Activated naive CD8-positive, alpha-beta T cell treated with anti-CD3 and anti-CD28 coated beads, Interleukin-2, amount 10 ng/mL, durations not matched to agents 7 days and 5 days (primary cell): ENCODE measurements at regions of chr6 and their contacts with region 1.

Region 1: DNA sequence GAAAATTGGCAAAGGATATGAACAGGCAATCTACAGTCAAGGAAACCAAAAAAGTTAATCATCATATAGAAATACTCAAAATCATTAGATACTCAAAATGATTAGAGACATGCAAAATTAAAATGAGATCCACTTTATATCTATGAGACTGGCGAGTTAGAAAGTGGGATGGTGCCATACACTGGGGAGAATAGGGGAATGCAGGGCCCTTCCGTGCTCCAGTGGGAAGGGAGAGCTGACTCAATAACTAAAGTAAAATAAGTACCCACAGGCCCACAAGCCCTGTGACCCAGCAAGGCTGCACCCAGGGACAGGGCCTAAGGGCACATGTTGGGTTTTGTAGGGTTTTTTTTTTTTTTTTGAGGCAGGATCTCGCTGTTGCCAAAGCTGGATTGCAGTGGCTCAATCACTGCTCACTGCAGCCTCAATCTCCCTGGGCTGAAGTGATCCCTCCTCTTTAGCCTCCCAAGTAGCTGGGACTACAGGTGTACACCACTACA is 44.9 kb downstream of the BAK1 start:
- DNase-seq: no peak
- ATAC-seq: no peak
- H3K4me3 Mint-ChIP-seq: no peak overlapping the region
- H3K27ac Mint-ChIP-seq: no peak overlapping the region
- H3K4me1 Mint-ChIP-seq: peaks cover 20% of the 10 kb centered on the region
- H3K27me3 Mint-ChIP-seq: peaks cover 11% of the 10 kb centered on the region

Region 2: GRCh38 chr6:33454009-33454946 is 80.9 kb before region 1 on chr6 and contains the start of gene ZBTB9:
- POLR2A ChIA-PET with region 1: interaction called, 12 read pairs
- DNase-seq: peak; percentile 93
- ATAC-seq: peak; percentile 99
- H3K4me3 Mint-ChIP-seq: peak within 1 kb of the TSS; percentile 86
- H3K27ac Mint-ChIP-seq: peak within 1 kb of the TSS; percentile 75
- H3K4me1 Mint-ChIP-seq: peaks cover 21% of the 10 kb centered on the region
- H3K27me3 Mint-ChIP-seq: no peaks in the 10 kb centered on the region
- total RNA-seq, gene ZBTB9: 9.1 to 9.8 TPM

Region 3: GRCh38 chr6:33547499-33547898 is 12.3 kb after region 1 on chr6:
- POLR2A ChIA-PET with region 1: interaction called, 29 read pairs
- DNase-seq: no peak
- ATAC-seq: no peak
- H3K4me3 Mint-ChIP-seq: peak overlapping the region; percentile 34
- H3K27ac Mint-ChIP-seq: peak overlapping the region; percentile 79
- H3K4me1 Mint-ChIP-seq: peaks cover 21% of the 10 kb centered on the region
- H3K27me3 Mint-ChIP-seq: no peaks in the 10 kb centered on the region

Region 4: GRCh38 chr6:33570806-33571636 is 35.9 kb after region 1 on chr6:
- POLR2A ChIA-PET with region 1: interaction called, 28 read pairs
- DNase-seq: peak; percentile 93
- ATAC-seq: peak; percentile 91
- H3K4me3 Mint-ChIP-seq: peak overlapping the region; percentile 90
- H3K27ac Mint-ChIP-seq: peak overlapping the region; percentile 99
- H3K4me1 Mint-ChIP-seq: peaks cover 28% of the 10 kb centered on the region
- H3K27me3 Mint-ChIP-seq: no peaks in the 10 kb centered on the region

Region 5: GRCh38 chr6:33579828-33580714 is 44.9 kb after region 1 on chr6 and contains the start of gene BAK1:
- POLR2A ChIA-PET with region 1: interaction called, 37 read pairs
- DNase-seq: peak; percentile 81
- ATAC-seq: peak; percentile 94
- H3K4me3 Mint-ChIP-seq: peak within 1 kb of the TSS; percentile 99
- H3K27ac Mint-ChIP-seq: peak within 1 kb of the TSS; percentile 99
- H3K4me1 Mint-ChIP-seq: peaks cover 29% of the 10 kb centered on the region
- H3K27me3 Mint-ChIP-seq: no peaks in the 10 kb centered on the region
- total RNA-seq, gene BAK1: 48.0 to 48.1 TPM